ENCODE measurements at regions of chr13 and their contacts with region 1.

Region 1: GRCh38 chr13:110108347-110109174 is 198.4 kb downstream of the COL4A1 start:
- DNase-seq: peak; percentile 86 to 88
- H3K4me3 ChIP-seq: no peak overlapping the region
- H3K27ac ChIP-seq: peak overlapping the region; percentile 8; the same call in 1 of the 2 replicates
- H3K4me1 ChIP-seq: peaks cover 24% of the 10 kb centered on the region
- H3K27me3 ChIP-seq: no peaks in the 10 kb centered on the region
- CTCF ChIP-seq: peak; percentile 95

Region 2: DNA sequence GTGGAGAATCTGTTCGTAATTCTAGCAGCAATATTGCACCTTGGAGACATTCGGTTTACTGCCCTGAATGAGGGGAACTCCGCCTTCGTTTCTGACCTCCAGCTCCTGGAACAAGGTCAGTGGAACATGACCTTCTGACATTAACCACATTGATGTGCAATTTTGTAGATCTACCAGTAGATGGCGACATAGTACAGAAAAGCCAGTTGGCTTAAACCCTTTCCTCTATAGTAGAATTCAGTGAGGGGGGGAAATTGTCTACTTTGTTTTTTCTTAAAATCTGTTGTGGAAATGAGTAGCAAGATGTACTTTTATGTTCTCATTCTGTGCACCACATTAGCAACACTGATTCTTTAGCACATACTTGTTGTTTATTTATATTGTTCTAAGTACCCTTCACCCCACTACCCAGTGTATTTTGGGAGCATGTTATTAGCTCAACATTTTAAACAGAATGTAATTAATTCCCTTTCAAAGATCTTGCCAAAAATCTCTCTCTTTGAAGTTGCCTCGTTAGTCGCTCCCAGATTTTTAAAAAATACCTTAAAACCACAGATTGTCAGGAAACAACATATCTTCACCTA is 1146.9 kb before region 1 on chr13:
- CTCF ChIA-PET with region 1: no interaction called
- POLR2A ChIA-PET with region 1: no interaction called
- intact Hi-C with region 1: loop called (anchors 1 kb)
- DNase-seq: peak in 1 of 2 experiments; percentile 63
- H3K4me3 ChIP-seq: no peak overlapping the region
- H3K27ac ChIP-seq: peak overlapping the region; percentile 25
- H3K4me1 ChIP-seq: peaks cover 46% of the 10 kb centered on the region
- H3K27me3 ChIP-seq: no peaks in the 10 kb centered on the region
- CTCF ChIP-seq: peak; percentile 98

Region 3: DNA sequence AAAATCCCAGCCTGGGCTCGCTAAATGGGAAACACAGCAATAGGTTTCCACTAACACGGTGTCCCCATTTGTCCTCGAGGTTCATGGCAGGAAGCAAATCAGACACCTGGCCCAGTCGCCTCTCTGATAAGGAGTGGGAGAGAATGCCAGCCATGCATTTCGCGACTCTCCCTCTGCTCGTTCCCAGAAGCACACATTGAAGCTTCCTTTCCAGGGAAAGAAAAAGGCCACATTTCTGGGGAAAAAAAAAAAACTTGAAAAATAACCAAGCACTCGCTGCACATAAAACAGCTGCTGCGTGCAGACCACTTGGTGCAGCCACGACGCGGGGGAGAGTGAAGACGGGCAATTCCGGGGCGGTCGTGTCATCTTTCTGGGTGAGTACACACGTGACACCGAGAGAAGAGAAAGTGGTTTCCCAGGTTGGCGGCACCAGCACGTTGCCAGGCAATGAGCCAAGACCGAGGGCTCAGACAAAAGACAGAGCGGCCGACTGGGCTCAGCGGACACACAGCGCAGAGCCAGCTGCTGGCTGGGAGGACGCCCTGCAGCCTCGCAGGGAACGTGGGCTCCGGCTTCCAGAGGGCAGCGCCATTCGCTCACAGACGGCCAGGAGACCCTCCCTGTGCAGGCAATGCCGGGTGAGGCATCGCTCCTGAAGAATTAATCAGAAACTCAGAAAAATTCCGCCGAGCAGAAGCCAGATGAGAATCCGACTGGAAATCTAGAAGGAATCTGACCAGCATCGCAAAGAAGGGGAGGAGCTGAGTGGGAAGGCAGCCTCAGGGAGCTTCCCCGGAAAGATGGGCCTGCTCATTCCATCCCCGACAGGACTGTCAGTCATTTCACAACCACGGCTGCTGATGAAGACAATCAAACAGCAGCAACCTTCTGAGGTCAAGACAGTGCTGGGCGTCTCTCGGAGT is 239.0 kb before region 1 on chr13:
- CTCF ChIA-PET with region 1: no interaction called
- POLR2A ChIA-PET with region 1: no interaction called
- intact Hi-C with region 1: loop called (anchors 1 kb)
- DNase-seq: peak; percentile 82
- H3K4me3 ChIP-seq: peak overlapping the region; percentile 54; the same call in 1 of the 2 replicates
- H3K27ac ChIP-seq: peak overlapping the region; percentile 79
- H3K4me1 ChIP-seq: peaks cover 82% of the 10 kb centered on the region
- H3K27me3 ChIP-seq: no peaks in the 10 kb centered on the region
- CTCF ChIP-seq: peak; percentile 40; the same call in 1 of the 2 replicates

Region 4: DNA sequence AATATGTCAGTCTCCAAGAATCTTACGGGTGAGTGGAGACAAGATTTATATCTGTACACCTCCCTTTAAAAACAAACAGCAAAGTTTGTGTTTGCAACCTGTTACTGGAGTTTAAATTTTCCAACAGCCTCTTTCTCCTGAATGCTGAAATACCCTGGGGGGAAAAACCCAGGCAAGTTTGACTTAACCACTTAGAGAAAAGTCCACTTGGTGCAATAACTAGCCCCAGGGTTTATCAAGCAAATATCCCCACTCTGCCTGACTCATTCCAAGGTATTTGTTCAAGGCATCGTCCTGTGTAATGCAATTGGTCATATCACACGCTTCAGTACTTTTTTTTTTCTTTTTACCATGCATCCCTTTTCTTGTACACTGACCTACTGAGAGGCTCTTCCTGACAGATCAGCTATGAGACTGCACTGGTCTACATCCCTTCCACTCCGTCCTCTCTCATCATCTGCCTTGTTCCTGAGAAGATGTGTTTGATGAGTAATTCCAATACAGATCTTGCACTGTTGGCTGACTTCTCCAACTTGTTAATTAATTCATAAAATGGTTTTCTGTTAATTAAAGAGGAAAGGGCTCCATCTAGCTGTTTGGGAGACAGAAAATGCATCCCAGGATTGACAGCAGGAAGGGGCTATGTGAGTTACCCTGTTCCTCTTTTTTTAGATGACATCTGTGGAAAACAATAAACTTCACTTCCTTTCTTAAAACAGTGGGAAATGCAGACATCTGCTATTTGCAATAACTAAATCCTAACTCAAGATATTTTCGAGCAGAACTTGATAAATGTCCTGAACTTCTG is 109.6 kb before region 1 on chr13:
- CTCF ChIA-PET with region 1: no interaction called
- POLR2A ChIA-PET with region 1: no interaction called
- intact Hi-C with region 1: loop called (anchors 2 kb)
- DNase-seq: peak; percentile 71 to 100
- H3K4me3 ChIP-seq: peak overlapping the region; percentile 1; the same call in 1 of the 2 replicates
- H3K27ac ChIP-seq: peak overlapping the region; percentile 45
- H3K4me1 ChIP-seq: peaks cover 50% of the 10 kb centered on the region
- H3K27me3 ChIP-seq: no peaks in the 10 kb centered on the region
- CTCF ChIP-seq: peak; percentile 33; the same call in 1 of the 2 replicates

Region 5: GRCh38 chr13:110089815-110090214 is 18.7 kb before region 1 on chr13:
- CTCF ChIA-PET with region 1: no interaction called
- POLR2A ChIA-PET with region 1: no interaction called
- intact Hi-C with region 1: no loop called
- DNase-seq: no peak
- H3K4me3 ChIP-seq: no peak overlapping the region
- H3K27ac ChIP-seq: no peak overlapping the region
- H3K4me1 ChIP-seq: peaks cover 9% of the 10 kb centered on the region
- H3K27me3 ChIP-seq: no peaks in the 10 kb centered on the region
- CTCF ChIP-seq: peak; percentile 57

Region 6: DNA sequence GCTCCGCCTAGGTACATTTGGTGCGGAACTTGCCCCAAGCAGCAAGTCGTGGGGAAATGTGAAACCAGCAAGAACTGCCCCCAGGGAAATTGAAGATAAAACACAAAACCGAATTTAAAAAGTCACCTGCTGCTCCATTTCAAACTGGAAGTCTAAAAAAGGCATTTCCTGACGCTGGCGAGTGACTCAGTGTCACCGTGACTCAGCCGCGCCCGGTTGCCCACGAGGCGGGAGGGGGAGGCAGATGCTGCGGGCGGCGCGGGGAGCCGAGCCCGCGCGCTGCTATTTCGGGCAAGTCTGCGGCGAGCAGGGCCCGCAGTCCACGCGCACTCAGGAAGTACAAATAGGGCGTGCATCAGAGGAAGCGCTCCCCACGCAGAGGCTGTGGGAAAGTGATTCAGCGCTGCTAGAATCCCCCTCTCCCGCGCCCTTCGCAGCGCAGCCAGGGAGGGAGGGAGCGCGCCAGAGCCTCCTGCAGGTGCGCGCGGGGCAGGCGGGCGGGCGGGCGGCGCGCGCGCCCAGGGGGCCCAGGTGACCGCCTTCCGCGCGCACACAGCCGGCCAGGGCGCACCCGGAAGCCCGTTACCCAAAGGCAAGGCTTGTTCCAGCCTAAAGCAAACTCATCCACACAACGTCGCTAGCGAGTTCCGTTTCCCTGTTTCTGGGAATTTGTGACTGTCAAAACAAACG is 29.6 kb after region 1 on chr13:
- CTCF ChIA-PET with region 1: interaction called, 6 read pairs
- POLR2A ChIA-PET with region 1: interaction called, 6 read pairs
- intact Hi-C with region 1: loop called (anchors 1 kb)
- DNase-seq: peak; percentile 82 to 94
- H3K4me3 ChIP-seq: peak overlapping the region; percentile 67
- H3K27ac ChIP-seq: peak overlapping the region; percentile 95
- H3K4me1 ChIP-seq: peaks cover 42% of the 10 kb centered on the region
- H3K27me3 ChIP-seq: no peaks in the 10 kb centered on the region
- CTCF ChIP-seq: peak; percentile 42; the same call in 1 of the 2 replicates

Region 7: DNA sequence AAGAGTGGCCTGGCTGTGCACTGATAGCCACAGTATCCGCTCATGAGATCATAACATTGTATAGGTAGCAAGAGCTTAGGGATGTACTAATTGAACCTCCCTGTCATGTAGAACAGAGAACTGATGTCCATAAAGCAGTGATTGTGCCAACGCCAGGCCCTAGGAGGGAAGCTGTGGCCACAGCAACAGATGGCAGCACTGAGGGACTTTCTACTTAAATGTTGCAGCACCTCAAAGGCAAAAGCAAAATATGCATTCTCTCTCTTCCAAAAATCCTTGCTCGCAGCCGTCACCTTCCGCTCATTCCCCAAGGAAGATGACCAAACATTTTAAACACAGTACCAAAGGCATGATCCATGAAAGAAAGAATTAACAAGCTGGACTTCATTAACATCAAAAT is 166.1 kb after region 1 on chr13:
- CTCF ChIA-PET with region 1: no interaction called
- POLR2A ChIA-PET with region 1: no interaction called
- intact Hi-C with region 1: no loop called
- DNase-seq: no peak
- H3K4me3 ChIP-seq: no peak overlapping the region
- H3K27ac ChIP-seq: no peak overlapping the region
- H3K4me1 ChIP-seq: peaks cover 23% of the 10 kb centered on the region
- H3K27me3 ChIP-seq: no peaks in the 10 kb centered on the region
- CTCF ChIP-seq: no peak